ENCODE measurements at regions of chr14 and their contacts with region 1.

Region 1: DNA sequence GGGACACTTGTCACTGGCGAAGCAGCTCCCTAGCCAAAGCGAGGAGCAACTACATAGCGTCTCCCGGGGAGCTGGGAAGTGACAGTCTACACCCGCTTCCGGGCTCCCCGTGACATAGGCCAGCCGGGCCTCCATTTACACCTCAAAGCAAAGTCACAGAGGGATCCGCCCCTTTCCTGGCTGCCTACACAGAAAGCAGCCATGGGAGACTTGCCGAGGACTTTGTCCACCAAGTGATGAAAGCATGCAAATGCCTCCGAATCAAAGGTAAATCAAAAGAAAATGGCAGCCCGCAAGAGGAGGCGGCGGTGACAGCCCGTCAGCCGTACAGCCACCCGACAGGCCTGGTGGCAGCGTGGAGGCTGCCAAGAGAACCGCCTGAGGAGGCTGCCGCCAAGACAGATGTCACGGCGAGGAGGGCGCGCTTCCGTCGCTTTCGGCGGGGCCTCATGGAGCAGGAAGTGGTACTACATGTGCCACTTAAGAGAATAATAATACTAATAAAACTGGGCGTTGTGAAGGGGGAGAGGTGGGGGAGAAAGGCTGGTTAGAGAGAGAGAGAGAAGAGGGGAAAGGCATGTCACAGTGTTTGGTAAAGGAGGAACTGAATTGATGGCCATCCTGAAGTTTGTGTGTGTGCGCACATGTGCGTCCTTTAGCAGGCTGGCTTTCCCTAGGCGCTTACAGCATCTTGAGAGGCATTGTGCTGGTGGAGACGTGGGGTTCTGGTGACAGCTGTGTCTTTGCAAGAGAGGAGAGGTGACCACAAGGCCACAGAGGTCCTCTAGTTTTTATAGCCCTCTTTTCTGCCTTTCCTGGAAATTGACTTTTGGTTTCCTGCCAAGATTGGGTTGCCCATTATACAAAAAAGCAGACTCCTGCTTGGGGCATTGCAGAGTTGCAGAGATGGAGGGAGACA is 661.7 kb downstream of the VRK1 start:
- DNase-seq: peak; percentile 90
- H3K4me3 Mint-ChIP-seq: peak overlapping the region; percentile 96
- H3K27ac Mint-ChIP-seq: peak overlapping the region; percentile 100
- H3K4me1 Mint-ChIP-seq: peaks cover 50% of the 10 kb centered on the region
- H3K27me3 Mint-ChIP-seq: no peaks in the 10 kb centered on the region

Region 2: DNA sequence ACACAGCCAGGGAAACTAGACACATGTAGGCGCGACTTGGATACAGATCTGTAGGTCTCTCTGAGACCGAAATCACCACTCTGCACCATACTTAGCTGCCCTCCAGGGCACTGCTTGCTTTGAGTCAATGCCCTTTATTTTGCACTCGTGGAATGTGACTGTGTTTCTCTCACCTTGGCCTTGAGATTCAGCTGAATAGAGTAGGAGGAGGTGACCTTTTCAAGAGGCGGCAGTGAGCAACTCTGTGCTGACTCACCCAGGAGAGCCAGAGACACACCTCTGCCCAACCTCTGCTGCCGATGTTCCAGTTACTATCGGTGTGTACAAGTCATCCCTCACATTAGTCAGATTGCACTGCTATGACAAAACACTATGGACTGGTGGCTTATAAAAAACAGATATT is 78.4 kb before region 1 on chr14:
- CTCF ChIA-PET with region 1: no interaction called
- POLR2A ChIA-PET with region 1: no interaction called
- intact Hi-C with region 1: loop called (anchors 1 kb)
- DNase-seq: peak; percentile 89
- H3K4me3 Mint-ChIP-seq: no peak overlapping the region
- H3K27ac Mint-ChIP-seq: peak overlapping the region; percentile 78
- H3K4me1 Mint-ChIP-seq: peaks cover 59% of the 10 kb centered on the region
- H3K27me3 Mint-ChIP-seq: no peaks in the 10 kb centered on the region

Region 3: DNA sequence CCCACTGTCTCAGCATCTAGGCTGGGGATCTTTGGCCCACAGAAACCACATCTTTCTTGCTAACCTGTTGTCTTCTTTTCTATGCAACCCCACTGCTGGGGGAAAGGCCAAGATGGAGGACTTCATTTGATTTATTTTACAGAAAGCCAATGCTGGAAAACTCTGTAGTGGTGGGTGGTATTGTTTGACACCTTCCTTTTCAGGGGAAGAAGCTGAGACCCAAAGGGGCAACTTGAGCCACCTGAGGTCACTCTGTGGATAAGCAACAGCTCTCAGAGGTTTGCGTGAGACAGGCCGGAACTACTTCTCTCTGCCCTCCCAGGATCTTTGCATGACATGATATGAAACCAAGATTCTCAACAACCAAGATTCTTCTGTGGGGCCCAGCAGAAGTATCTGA is 16.6 kb before region 1 on chr14:
- CTCF ChIA-PET with region 1: interaction called, 3 read pairs
- POLR2A ChIA-PET with region 1: interaction called, 10 read pairs
- intact Hi-C with region 1: loop called (anchors 1 kb)
- DNase-seq: peak; percentile 60
- H3K4me3 Mint-ChIP-seq: peak overlapping the region; percentile 21
- H3K27ac Mint-ChIP-seq: peak overlapping the region; percentile 96
- H3K4me1 Mint-ChIP-seq: peaks cover 25% of the 10 kb centered on the region
- H3K27me3 Mint-ChIP-seq: no peaks in the 10 kb centered on the region

Region 4: GRCh38 chr14:97485201-97485600 is 26.3 kb after region 1 on chr14:
- CTCF ChIA-PET with region 1: no interaction called
- POLR2A ChIA-PET with region 1: no interaction called
- intact Hi-C with region 1: no loop called
- DNase-seq: no peak
- H3K4me3 Mint-ChIP-seq: no peak overlapping the region
- H3K27ac Mint-ChIP-seq: no peak overlapping the region
- H3K4me1 Mint-ChIP-seq: no peaks in the 10 kb centered on the region
- H3K27me3 Mint-ChIP-seq: no peaks in the 10 kb centered on the region

Region 5: GRCh38 chr14:97584528-97584927 is 125.6 kb after region 1 on chr14:
- CTCF ChIA-PET with region 1: no interaction called
- POLR2A ChIA-PET with region 1: no interaction called
- intact Hi-C with region 1: no loop called
- DNase-seq: no peak
- H3K4me3 Mint-ChIP-seq: no peak overlapping the region
- H3K27ac Mint-ChIP-seq: no peak overlapping the region
- H3K4me1 Mint-ChIP-seq: peaks cover 12% of the 10 kb centered on the region
- H3K27me3 Mint-ChIP-seq: no peaks in the 10 kb centered on the region

Region 6: GRCh38 chr14:97620066-97620465 is 161.1 kb after region 1 on chr14:
- CTCF ChIA-PET with region 1: no interaction called
- POLR2A ChIA-PET with region 1: no interaction called
- intact Hi-C with region 1: loop called (anchors 2 kb)
- DNase-seq: no peak
- H3K4me3 Mint-ChIP-seq: peak overlapping the region; percentile 65
- H3K27ac Mint-ChIP-seq: peak overlapping the region; percentile 80
- H3K4me1 Mint-ChIP-seq: peaks cover 45% of the 10 kb centered on the region
- H3K27me3 Mint-ChIP-seq: no peaks in the 10 kb centered on the region

Region 7: GRCh38 chr14:98293576-98293975 is 834.7 kb after region 1 on chr14:
- CTCF ChIA-PET with region 1: no interaction called
- POLR2A ChIA-PET with region 1: no interaction called
- intact Hi-C with region 1: no loop called
- DNase-seq: no peak
- H3K4me3 Mint-ChIP-seq: no peak overlapping the region
- H3K27ac Mint-ChIP-seq: no peak overlapping the region
- H3K4me1 Mint-ChIP-seq: peaks cover 5% of the 10 kb centered on the region
- H3K27me3 Mint-ChIP-seq: no peaks in the 10 kb centered on the region

Measured in activated CD4-positive, alpha-beta memory T cell treated with anti-CD3 and anti-CD28 coated beads for 36 hours (primary cell).